ENCODE measurements at regions of chr11 and their contacts with region 1.

Region 1: GRCh38 chr11:59158206-59159068 is 13.5 kb upstream of the DTX4 start:
- DNase-seq: peak; percentile 74
- ATAC-seq: peak; percentile 98
- H3K4me3 Mint-ChIP-seq: no peak overlapping the region
- H3K27ac Mint-ChIP-seq: no peak overlapping the region
- H3K4me1 Mint-ChIP-seq: peaks cover 6% of the 10 kb centered on the region
- H3K27me3 Mint-ChIP-seq: peaks cover 6% of the 10 kb centered on the region

Region 2: GRCh38 chr11:58958500-58958899 is 199.9 kb before region 1 on chr11:
- CTCF ChIA-PET with region 1: interaction called, 7 read pairs
- POLR2A ChIA-PET with region 1: no interaction called
- intact Hi-C with region 1: loop called in 1 of 2 experiments (anchors 5 kb)
- DNase-seq: peak; percentile 68
- ATAC-seq: peak; percentile 51
- H3K4me3 Mint-ChIP-seq: no peak overlapping the region
- H3K27ac Mint-ChIP-seq: no peak overlapping the region
- H3K4me1 Mint-ChIP-seq: peaks cover 7% of the 10 kb centered on the region
- H3K27me3 Mint-ChIP-seq: peaks cover 5% of the 10 kb centered on the region

Region 3: DNA sequence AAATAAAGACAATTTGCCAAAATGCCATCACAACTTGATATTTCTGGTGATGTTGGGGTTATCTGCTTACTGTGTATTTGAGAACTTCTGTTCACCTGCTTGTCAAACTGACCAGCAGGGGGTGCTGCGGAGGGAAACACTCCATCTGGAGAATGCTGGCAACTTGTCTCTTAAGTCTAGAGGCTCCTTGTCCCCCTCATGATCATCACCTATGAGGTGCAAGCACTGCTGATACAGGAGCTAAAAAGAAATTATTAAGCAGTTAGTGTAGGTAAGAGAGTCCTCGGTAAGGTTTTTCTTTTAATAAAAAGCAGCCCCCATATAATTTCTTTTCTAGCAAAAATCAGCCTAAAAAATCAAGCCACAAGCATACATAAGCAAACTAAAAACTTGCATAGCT is 105.0 kb before region 1 on chr11:
- CTCF ChIA-PET with region 1: interaction called, 48 read pairs
- POLR2A ChIA-PET with region 1: no interaction called
- intact Hi-C with region 1: loop called (anchors 1 kb)
- DNase-seq: peak; percentile 89
- ATAC-seq: peak; percentile 75
- H3K4me3 Mint-ChIP-seq: no peak overlapping the region
- H3K27ac Mint-ChIP-seq: no peak overlapping the region
- H3K4me1 Mint-ChIP-seq: peaks cover 6% of the 10 kb centered on the region
- H3K27me3 Mint-ChIP-seq: peaks cover 9% of the 10 kb centered on the region

Region 4: DNA sequence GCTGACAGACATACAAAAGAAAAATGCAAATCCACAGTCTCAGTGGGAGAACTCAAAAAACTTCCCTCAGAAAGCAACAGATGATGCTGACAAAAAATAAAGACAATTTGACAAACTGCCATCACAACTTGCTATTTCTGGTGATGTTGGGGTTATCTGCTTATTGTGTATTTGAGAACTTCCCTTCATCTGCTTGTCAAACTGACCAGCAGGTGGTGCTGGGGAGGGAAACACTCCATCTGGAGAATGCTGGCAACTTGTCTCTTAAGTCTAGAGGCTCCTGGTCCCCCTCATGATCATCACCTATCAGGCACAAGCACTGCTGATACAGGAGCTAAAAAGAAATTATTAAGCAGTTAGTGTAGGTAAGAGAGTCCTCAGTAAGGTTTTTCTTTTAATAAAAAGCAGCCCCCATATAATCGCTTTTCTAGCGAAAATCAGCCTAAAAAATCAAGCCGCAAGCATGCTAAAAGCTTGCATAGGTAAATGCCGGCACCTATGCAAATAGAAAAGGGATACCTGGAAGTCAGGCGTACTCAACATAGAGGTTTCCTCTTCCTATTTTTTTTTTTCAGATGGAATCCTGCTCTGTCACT is 61.2 kb before region 1 on chr11:
- CTCF ChIA-PET with region 1: interaction called, 33 read pairs
- POLR2A ChIA-PET with region 1: interaction called, 6 read pairs
- intact Hi-C with region 1: loop called (anchors 1 kb)
- DNase-seq: peak; percentile 79
- ATAC-seq: peak; percentile 77
- H3K4me3 Mint-ChIP-seq: no peak overlapping the region
- H3K27ac Mint-ChIP-seq: no peak overlapping the region
- H3K4me1 Mint-ChIP-seq: peaks cover 9% of the 10 kb centered on the region
- H3K27me3 Mint-ChIP-seq: peaks cover 21% of the 10 kb centered on the region

Region 5: GRCh38 chr11:59106363-59107336 is 51.8 kb before region 1 on chr11 and contains the start of gene FAM111B:
- CTCF ChIA-PET with region 1: interaction called, 18 read pairs
- POLR2A ChIA-PET with region 1: no interaction called
- intact Hi-C with region 1: loop called (anchors 2 kb)
- DNase-seq: peak; percentile 86
- ATAC-seq: peak; percentile 87
- H3K4me3 Mint-ChIP-seq: peak within 1 kb of the TSS; percentile 79
- H3K27ac Mint-ChIP-seq: peak within 1 kb of the TSS; percentile 64
- H3K4me1 Mint-ChIP-seq: peaks cover 54% of the 10 kb centered on the region
- H3K27me3 Mint-ChIP-seq: peaks cover 23% of the 10 kb centered on the region
- total RNA-seq, gene FAM111B: 32.3 to 38.9 TPM

Region 6: DNA sequence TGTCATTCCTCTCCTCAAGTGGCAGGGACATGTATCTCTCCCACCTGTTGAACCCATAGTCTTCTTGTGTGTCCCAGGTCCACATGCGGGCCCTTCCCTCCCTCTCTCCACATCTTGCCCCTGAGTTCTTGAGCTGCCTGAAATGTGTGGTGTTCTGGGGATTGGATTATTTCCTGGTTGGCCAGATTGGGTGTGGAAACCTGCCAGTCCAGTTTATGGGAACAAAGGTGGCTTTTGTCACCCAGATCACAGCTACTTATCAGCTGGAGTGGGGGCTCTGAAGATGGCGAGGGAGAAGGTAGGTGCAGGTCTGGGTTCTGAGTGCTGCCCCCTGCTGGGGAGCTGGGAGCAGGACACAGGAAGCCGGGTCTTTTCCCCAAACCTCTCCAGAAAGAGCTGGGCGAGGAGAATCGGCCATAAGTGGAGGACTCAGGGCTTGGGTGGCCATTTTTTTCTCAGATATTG is 27.7 kb after region 1 on chr11:
- CTCF ChIA-PET with region 1: interaction called, 11 read pairs
- POLR2A ChIA-PET with region 1: no interaction called
- intact Hi-C with region 1: no loop called
- DNase-seq: peak; percentile 75
- ATAC-seq: peak; percentile 85
- H3K4me3 Mint-ChIP-seq: no peak overlapping the region
- H3K27ac Mint-ChIP-seq: no peak overlapping the region
- H3K4me1 Mint-ChIP-seq: no peaks in the 10 kb centered on the region
- H3K27me3 Mint-ChIP-seq: no peaks in the 10 kb centered on the region

Region 7: DNA sequence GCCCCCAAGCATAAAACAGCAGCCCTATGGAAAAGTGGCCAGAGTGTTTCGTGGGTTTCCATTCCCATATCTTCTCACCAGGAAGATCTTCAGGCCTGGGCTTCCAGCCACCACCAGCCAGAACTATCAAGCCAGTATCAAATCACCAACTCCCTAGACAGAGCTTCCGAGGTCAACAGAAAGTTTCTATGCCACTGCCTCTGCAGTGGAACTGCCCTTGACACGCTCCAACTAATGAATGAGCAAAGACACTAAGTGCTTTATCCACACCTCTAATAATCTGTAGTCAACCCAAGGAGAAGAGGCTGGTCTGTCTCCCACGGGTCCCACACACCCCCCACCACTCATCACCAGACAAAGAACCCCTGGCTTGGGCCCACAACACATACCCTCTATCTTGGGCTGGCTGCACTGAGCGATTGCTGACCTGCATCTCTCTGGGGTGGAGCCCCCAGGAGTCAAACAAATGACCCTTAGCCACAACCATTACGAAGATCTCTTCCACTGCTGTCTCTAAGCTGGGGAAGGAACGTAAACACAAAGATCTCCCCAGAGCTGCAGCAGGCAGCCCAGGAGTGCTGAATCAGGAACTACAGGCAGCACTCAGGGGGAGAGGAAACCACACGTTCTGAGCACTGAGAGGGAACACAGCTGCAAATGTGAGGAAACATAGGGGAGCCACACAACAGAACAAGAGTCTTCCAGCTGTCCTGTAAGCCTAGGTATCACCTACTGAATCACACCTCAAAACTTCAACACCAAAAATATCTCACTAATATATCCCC is 210.0 kb after region 1 on chr11:
- CTCF ChIA-PET with region 1: no interaction called
- POLR2A ChIA-PET with region 1: no interaction called
- intact Hi-C with region 1: no loop called
- DNase-seq: no peak
- ATAC-seq: no peak
- H3K4me3 Mint-ChIP-seq: no peak overlapping the region
- H3K27ac Mint-ChIP-seq: no peak overlapping the region
- H3K4me1 Mint-ChIP-seq: no peaks in the 10 kb centered on the region
- H3K27me3 Mint-ChIP-seq: peaks cover 20% of the 10 kb centered on the region

Region 8: DNA sequence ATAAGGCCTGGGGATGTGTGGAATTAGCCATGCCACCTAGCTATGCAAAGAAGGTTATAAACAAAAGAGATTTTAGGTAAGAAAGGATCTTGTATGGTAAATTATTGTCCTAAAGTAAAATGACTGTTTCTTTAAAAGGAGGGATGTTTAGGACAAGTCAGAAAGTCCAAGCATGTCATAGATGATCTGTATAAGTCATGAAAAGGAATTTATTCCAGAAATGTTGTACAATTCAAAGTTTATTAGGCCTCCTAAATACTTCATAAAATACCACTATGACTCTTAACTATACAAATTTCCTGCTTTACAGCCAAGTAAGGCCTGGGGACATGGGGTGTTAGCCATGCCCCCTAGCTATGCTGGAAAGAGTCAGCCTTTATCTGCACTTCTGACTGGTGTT is 245.1 kb after region 1 on chr11:
- CTCF ChIA-PET with region 1: no interaction called
- POLR2A ChIA-PET with region 1: no interaction called
- intact Hi-C with region 1: no loop called
- DNase-seq: no peak
- ATAC-seq: no peak
- H3K4me3 Mint-ChIP-seq: no peak overlapping the region
- H3K27ac Mint-ChIP-seq: no peak overlapping the region
- H3K4me1 Mint-ChIP-seq: no peaks in the 10 kb centered on the region
- H3K27me3 Mint-ChIP-seq: peaks cover 4% of the 10 kb centered on the region